Left cardiac atrium (tissue), 4 donors: ENCODE measurements at regions of chr14 and their contacts with region 1.

Region 1: DNA sequence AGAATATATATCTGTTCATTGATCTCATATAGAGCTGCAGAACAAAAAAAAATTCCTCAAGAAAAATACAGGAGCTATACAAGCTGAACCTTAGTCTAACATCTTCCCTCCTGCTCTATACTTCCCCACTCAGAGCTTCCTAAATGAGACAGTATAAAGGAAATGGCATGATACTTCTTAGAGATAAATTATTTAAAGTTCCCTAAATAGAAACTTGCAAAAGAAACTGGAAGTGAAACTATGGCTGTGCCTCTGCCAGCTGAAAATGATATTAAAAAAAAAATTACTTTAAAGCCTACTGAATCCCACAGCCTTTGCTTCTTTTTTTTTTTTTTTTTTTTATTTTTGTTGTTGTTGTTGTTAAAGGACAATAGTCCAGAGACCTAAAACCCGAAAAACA is 11.6 kb upstream of the NEK9 start:
- DNase-seq: no peak
- ATAC-seq: peak in 1 of 2 donors; percentile 53

Region 2: DNA sequence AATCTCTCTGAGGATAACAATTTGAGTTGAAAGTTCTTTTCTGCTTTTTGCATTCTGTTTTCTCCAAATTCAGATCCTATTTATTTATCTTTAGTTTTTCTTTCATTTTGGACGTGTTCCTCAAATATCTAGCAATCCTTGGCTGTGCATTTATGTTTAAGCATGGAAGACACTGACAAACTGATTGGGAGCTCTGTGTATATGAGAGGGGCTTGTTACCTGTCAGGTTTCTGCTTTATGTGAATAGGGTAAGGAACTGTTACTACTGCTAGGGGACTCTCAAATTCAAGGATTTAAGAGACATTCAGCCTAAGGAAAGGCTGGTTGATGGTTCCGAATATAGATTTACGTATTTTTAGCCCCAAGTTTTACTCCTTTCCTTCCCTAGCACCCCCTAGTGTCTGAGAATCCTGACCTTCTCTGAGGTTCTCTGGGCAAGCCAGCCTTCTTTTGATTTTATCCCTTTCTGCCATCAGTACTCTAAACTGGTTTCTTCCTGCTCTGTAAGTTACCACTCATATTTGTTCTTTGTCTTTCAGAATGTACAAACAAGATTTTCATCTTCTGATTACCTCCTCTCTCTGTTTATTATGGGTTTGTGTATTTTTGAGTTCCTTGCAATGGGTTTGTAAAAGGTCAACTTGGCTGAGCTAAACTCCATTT is 344.9 kb before region 1 on chr14:
- intact Hi-C with region 1: no loop called
- DNase-seq: no peak
- ATAC-seq: no peak

Region 3: GRCh38 chr14:75002392-75003249 is 135.9 kb before region 1 on chr14 and contains the start of gene EIF2B2:
- intact Hi-C with region 1: no loop called
- DNase-seq: peak; percentile 98
- ATAC-seq: peak; percentile 100
- total RNA-seq, gene EIF2B2: 27.8 to 30.3 TPM

Region 4: DNA sequence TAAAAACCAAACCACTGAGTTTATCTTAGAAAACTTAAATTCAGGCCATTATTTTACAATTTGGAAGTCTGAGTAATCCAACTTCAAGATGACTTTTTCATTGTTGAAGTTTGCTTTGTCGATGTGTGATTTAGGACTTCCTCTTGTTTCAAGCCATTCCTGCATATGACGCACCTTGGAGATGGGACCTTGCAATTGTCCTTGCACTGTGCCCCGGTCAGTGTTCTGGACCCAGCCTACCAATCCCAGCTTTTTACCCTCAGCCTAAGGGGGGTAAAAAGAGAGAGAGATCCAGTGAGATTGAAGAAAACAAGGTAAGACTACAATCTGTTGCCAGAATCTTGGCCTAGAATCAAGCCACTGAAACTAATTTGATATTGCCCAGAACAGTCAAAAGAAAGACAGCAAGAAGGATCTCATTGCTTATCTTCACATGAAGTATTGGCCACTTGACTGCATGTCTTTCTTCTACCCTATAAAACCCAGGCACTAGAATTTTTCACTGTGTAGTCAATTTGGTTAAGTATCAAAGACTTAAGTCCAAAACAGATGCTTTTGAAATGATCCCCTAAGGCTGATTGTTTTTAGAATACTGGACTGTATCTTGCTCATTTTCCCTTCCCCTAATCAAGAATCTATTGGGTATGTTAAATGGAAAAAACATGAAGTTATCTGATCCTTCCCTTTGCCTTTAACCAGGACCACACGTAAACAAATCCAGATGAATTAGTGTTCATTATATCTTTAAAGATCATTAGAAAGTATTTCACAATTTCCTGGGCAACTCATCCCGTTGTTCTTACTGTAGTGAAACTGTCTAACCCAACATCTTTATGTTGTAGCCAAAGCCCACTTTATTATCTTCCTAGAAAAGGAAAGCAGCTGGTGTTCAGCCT is 84.8 kb before region 1 on chr14:
- intact Hi-C with region 1: no loop called
- DNase-seq: no peak
- ATAC-seq: no peak

Region 5: GRCh38 chr14:75479770-75480600 is 341.5 kb after region 1 on chr14:
- intact Hi-C with region 1: loop called in 1 of 2 experiments (anchors 5 kb)
- DNase-seq: no peak
- ATAC-seq: no peak